ENCODE measurements at regions of chr11 and their contacts with region 1.

Region 1: GRCh38 chr11:64846998-64847666 is 2.7 kb upstream of the CDC42BPG start:
- DNase-seq: peak; percentile 95 to 97
- H3K4me3 ChIP-seq: no peak overlapping the region
- H3K27ac ChIP-seq: peak overlapping the region in 2 of 5 donors; percentile 92 to 94
- H3K4me1 ChIP-seq: peaks cover 55 to 86% (median 82%) of the 10 kb centered on the region in 4 donors
- H3K27me3 ChIP-seq: no peaks in the 10 kb centered on the region
- CTCF ChIP-seq: peak in 6 of 7 experiments; percentile 13 to 98 (median 94)
- EP300 ChIP-seq: no peak
- POLR2A ChIP-seq: no peak

Region 2: DNA sequence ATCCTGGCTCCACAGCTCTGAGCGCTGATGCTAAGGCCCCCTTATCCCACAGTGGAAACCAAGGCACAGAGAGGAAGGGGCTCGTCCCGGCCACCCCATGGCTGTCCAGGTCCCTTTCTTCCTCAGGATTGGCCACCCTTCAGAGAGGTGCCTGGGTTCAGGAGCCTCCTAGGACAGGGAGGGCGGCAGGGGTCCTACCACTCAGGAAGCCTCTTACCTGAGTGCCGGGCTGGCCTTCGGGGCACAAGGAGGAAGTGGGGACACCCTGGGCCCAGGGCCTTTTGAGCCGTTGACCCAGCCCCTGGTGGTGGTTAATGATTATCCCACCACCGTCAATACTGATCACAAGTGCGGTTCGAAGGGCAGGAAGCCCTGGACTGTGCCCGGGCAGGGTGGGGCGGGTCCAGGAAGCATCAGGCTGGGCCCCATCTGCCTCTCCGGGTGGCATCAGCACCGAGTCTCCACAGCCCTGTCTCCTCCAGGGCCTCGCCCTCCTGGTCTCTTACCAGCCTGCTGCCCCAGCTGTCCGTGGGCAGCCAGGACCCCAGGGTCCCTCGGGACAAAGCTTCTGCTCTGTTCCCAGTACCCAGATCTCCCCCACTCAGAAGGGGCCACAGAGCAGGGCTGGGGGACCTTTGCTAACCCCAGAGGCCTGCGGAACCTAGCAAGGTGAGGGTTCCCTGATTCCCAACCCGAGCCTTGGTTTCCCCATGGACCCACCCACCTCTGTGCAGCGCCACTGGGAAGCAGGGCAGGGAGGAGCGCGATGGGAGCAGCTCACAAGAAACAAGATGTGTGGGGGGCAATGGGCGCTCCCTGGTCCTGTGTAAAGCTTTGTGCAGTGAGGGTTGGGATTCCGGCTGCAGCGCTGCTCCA is 46.3 kb after region 1 on chr11:
- intact Hi-C with region 1: loop called (anchors 2 kb)
- DNase-seq: peak; percentile 84 to 87
- H3K4me3 ChIP-seq: peak overlapping the region; percentile 37 to 52 (median 45)
- H3K27ac ChIP-seq: peak overlapping the region; percentile 84 to 94 (median 86)
- H3K4me1 ChIP-seq: peaks cover 26 to 49% (median 39%) of the 10 kb centered on the region in 4 donors
- H3K27me3 ChIP-seq: no peaks in the 10 kb centered on the region
- CTCF ChIP-seq: peak in 2 of 7 experiments; percentile 36 to 68
- EP300 ChIP-seq: no peak
- POLR2A ChIP-seq: peak in 1 of 4 donors; percentile 67